RWPE1 (cell line): ENCODE measurements at regions of chr6 and their contacts with region 1.

Region 1: GRCh38 chr6:33299237-33299944 is 649 bp upstream of the RGL2 start:
- DNase-seq: peak; percentile 82
- H3K27ac ChIP-seq: peak overlapping the region; percentile 98
- CTCF ChIP-seq: peak; percentile 84

Region 2: GRCh38 chr6:33276864-33277662 is 22.3 kb before region 1 on chr6 and contains the start of gene B3GALT4:
- CTCF ChIA-PET with region 1: interaction called, 7 read pairs
- POLR2A ChIA-PET with region 1: interaction called, 14 read pairs
- DNase-seq: peak; percentile 81
- H3K27ac ChIP-seq: peak within 1 kb of the TSS; percentile 95
- CTCF ChIP-seq: peak; percentile 53

Region 3: GRCh38 chr6:33313709-33314514 is 14.5 kb after region 1 on chr6 and contains the start of gene TAPBP:
- CTCF ChIA-PET with region 1: interaction called, 15 read pairs
- POLR2A ChIA-PET with region 1: no interaction called
- DNase-seq: peak; percentile 61
- H3K27ac ChIP-seq: peak within 1 kb of the TSS; percentile 95
- CTCF ChIP-seq: no peak